ENCODE measurements at regions of chr13 and their contacts with region 1.

Region 1: DNA sequence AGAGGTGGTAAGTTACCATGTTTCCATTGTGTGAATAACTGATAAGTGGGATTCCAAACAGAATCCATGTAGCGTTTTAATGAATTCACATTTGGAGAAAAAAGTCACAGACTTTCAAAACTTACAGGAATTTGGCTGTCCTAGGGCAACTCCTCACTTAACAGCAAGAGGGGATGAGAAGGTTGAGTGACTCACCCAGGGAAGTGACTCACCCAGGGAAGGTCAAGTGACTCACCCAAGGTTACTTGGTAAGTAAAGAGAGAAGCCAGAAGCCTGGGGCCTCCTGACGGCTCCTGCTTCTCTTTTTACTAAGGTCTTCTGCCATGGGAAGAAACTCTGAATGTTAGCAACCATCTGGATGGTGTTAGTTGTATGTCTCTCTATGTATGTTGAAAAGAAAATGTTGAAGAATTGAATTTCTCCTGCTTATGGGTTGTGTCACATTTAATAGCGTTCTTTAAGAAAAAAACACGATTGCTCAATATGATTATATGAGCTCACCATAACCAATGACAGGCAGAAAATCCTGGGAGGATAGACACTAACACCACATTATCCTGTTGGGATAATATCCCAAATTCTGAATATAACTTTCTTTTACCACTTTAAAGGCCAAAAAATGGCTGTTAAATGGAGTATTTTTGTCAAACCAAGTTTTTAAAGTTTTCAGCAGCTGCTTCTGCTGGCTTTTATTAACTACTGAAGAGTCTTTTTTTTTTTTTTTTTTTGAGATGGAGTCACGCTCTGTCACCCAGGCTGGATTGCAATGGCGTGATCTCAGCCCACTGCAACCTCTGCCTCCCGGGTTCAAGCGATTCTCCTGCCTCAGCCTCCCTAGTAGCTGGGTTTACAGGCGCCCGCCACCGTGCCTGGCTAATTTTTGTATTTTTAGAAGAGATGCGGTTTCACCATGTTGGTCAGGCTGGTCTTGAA is 195.6 kb downstream of the GGACT start:
- DNase-seq: peak; percentile 58 to 81
- ATAC-seq: peak; percentile 94 to 99
- H3K4me3 ChIP-seq: no peak overlapping the region
- H3K27ac ChIP-seq: peak overlapping the region; percentile 27 to 70 (median 56)
- H3K4me1 ChIP-seq: no peaks in the 10 kb centered on the region
- H3K27me3 ChIP-seq: no peaks in the 10 kb centered on the region
- CTCF ChIP-seq: no peak
- POLR2A ChIP-seq: no peak

Region 2: GRCh38 chr13:100491164-100491842 is 98.3 kb after region 1 on chr13:
- in situ Hi-C with region 1: no loop called
- intact Hi-C with region 1: loop called (anchors 5 kb)
- DNase-seq: peak; percentile 29 to 46
- ATAC-seq: peak; percentile 66 to 77
- H3K4me3 ChIP-seq: no peak overlapping the region
- H3K27ac ChIP-seq: peak overlapping the region in 3 of 4 donors; percentile 31 to 36 (median 33)
- H3K4me1 ChIP-seq: no peaks in the 10 kb centered on the region
- H3K27me3 ChIP-seq: no peaks in the 10 kb centered on the region
- CTCF ChIP-seq: no peak
- POLR2A ChIP-seq: no peak